Prostate gland (tissue), 2 donors: ENCODE measurements at regions of chr6 and their contacts with region 1.

Region 1: DNA sequence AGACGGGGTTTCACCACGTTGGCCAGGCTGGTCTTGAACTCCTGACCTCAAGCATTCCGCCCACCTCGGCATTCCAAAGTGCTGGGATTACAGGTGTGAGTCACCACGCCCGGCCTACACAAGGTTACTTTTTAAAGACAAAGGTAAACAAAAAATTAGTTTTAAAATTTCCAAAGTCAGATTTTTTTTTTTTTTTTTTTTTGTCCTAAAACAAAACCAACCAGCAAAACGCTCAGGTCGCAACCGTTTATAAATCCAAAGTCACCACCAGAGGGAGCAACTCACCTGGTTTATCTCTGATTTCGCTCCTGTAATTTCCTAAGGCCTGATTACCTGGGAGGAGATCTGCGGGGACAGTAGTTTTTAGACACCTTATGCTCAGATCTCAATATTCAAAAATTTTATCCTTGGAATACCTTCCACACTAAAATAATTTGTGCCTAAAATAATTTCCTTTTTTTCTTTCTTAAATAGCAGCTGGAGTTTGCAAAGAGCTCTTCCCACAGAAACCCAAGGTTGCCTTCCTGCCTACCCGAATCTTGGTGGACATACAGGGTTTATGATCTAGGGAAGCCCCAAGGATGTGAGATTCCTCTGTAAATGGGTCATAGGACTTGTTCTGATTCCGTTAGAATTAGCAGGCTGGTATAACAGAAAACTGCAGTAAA is 19.8 kb upstream of the TREM1 start:
- DNase-seq: peak; percentile 61
- H3K4me3 ChIP-seq: no peak overlapping the region
- H3K27ac ChIP-seq: no peak overlapping the region
- H3K4me1 ChIP-seq: no peaks in the 10 kb centered on the region
- H3K27me3 ChIP-seq: no peaks in the 10 kb centered on the region
- CTCF ChIP-seq: peak; percentile 29 to 62 (median 58)
- POLR2A ChIP-seq: no peak

Region 2: GRCh38 chr6:41097467-41098090 is 208.7 kb before region 1 on chr6:
- intact Hi-C with region 1: loop called (anchors 5 kb)
- DNase-seq: no peak
- H3K4me3 ChIP-seq: no peak overlapping the region
- H3K27ac ChIP-seq: no peak overlapping the region
- H3K4me1 ChIP-seq: no peaks in the 10 kb centered on the region
- H3K27me3 ChIP-seq: no peaks in the 10 kb centered on the region
- CTCF ChIP-seq: no peak
- POLR2A ChIP-seq: no peak

Region 3: GRCh38 chr6:41191569-41191968 is 114.8 kb before region 1 on chr6:
- intact Hi-C with region 1: no loop called
- DNase-seq: no peak
- H3K4me3 ChIP-seq: no peak overlapping the region
- H3K27ac ChIP-seq: no peak overlapping the region
- H3K4me1 ChIP-seq: no peaks in the 10 kb centered on the region
- H3K27me3 ChIP-seq: no peaks in the 10 kb centered on the region
- CTCF ChIP-seq: peak in 1 of 4 experiments; percentile 22
- POLR2A ChIP-seq: no peak